ENCODE measurements at regions of chr9 and their contacts with region 1.

Region 1: DNA sequence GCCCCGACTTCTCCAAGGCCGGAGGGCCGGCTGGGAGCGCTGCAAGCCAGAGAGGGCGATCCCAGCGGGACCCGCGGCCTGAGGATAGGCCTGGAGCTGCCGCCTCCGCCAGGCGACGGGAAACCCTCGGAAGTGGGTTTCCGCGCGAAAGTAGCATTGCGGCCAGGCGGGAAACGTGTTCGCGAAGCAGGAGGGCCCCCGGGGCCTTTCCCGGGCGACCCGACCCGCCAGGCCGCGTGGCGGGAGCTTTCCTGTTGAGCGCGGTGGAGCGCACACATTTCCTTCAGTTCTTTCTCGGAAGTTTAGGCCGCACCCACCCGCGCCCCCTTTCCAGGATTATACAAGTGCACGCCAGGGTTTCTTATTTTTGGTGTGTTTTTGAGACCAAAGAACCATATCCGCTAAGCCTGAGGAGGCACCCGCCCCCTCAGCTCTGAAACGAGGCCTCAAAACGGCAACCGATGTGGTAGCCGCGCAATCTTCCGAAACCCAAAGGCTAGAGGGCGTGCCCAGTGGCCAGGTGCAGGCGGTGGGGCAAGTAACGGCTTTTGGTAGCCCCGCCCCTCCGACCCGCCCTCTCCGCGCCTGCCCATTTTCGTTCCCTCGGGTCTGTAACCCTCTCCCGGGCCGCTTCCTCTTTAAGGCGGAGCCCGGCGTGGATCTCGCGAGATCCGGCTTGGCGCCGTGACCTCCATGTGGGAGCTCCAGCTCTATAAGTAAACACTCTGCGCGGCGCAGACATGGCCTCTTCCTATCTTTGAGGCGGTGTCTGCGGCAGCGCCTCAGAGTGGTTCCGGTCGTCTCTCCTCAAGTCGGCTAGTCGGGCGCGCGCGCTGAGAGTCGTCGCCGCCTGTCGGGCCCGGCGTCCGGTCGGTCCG is at the start of gene UHRF2:
- DNase-seq: peak; percentile 98
- H3K4me3 Mint-ChIP-seq: peak within 1 kb of the TSS; percentile 96
- H3K27ac Mint-ChIP-seq: peak within 1 kb of the TSS; percentile 94
- H3K4me1 Mint-ChIP-seq: peaks cover 39% of the 10 kb centered on the region
- H3K27me3 Mint-ChIP-seq: peaks cover 2% of the 10 kb centered on the region
- total RNA-seq, gene UHRF2: 79.7 and 82.9 TPM in 2 replicates

Region 2: DNA sequence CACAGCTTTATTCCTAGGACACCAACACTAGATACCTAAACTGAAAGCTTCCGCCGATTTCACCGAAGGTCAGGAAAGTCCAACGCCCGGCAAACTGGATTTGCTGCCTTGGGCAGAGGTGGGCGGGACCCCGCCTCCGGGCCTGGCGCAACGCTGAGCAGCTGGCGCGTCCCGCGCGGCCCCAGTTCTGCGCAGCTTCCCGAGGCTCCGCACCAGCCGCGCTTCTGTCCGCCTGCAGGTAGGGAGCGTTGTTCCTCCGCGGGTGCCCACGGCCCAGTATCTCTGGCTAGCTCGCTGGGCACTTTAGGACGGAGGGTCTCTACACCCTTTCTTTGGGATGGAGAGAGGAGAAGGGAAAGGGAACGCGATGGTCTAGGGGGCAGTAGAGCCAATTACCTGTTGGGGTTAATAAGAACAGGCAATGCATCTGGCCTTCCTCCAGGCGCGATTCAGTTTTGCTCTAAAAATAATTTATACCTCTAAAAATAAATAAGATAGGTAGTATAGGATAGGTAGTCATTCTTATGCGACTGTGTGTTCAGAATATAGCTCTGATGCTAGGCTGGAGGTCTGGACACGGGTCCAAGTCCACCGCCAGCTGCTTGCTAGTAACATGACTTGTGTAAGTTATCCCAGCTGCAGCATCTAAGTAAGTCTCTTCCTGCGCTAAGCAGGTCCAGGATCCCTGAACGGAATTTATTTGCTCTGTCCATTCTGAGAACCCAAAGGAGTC is 962.2 kb before region 1 on chr9 and contains the start of gene CD274:
- intact Hi-C with region 1: loop called (anchors 10 kb)
- DNase-seq: peak; percentile 77
- H3K4me3 Mint-ChIP-seq: peak within 1 kb of the TSS; percentile 97
- H3K27ac Mint-ChIP-seq: peak within 1 kb of the TSS; percentile 92
- H3K4me1 Mint-ChIP-seq: peaks cover 71% of the 10 kb centered on the region
- H3K27me3 Mint-ChIP-seq: no peaks in the 10 kb centered on the region
- total RNA-seq, gene CD274: 36.7 and 40.5 TPM in 2 replicates

Region 3: GRCh38 chr9:6008169-6008979 is 404.4 kb before region 1 on chr9:
- intact Hi-C with region 1: loop called (anchors 2 kb)
- DNase-seq: peak; percentile 92
- H3K4me3 Mint-ChIP-seq: peak overlapping the region; percentile 74
- H3K27ac Mint-ChIP-seq: peak overlapping the region; percentile 84
- H3K4me1 Mint-ChIP-seq: peaks cover 53% of the 10 kb centered on the region
- H3K27me3 Mint-ChIP-seq: no peaks in the 10 kb centered on the region

Region 4: GRCh38 chr9:6428940-6429889 is 16.5 kb after region 1 on chr9:
- intact Hi-C with region 1: loop called (anchors 1 kb)
- DNase-seq: peak; percentile 31
- H3K4me3 Mint-ChIP-seq: peak overlapping the region; percentile 41
- H3K27ac Mint-ChIP-seq: peak overlapping the region; percentile 69
- H3K4me1 Mint-ChIP-seq: peaks cover 61% of the 10 kb centered on the region
- H3K27me3 Mint-ChIP-seq: no peaks in the 10 kb centered on the region

Region 5: DNA sequence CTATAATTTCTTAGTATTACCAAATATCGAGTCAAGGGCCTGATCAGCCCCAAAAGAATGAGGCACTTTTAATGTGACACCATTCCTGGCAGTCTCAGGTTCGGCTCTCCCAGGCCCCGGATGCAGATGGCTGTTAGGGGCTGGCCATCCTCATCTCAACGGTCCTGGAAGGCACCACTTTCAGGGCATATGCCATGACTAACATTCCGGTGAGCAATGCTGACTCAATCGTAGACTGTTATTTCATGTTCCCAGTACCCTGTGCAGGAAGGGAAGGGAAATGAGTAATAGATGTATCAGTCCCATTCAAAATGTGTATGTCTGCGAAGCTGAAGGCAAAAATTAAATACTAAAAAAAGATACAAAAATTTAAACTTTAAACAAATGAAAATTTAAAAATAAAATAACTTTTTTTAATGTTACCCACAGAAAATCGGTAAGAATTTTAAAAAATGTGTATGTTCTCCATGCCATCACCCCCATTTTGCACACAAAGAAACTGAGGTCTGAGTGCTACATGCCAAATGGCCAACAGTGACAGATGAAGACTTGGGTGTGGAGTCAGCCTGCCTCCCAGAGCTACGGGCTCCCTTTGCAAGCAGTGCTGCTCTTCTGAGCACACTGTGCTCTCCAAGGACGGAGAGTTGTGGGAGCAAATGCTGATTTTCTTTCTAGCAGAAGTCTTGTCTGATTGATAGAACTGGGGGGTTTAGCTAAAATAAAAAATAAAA is 153.8 kb after region 1 on chr9:
- intact Hi-C with region 1: loop called (anchors 1 kb)
- DNase-seq: peak; percentile 19
- H3K4me3 Mint-ChIP-seq: peak overlapping the region; percentile 33
- H3K27ac Mint-ChIP-seq: peak overlapping the region; percentile 82
- H3K4me1 Mint-ChIP-seq: peaks cover 19% of the 10 kb centered on the region
- H3K27me3 Mint-ChIP-seq: peaks cover 5% of the 10 kb centered on the region

Region 6: GRCh38 chr9:6757456-6758247 is 344.9 kb after region 1 on chr9 and contains the start of gene KDM4C:
- intact Hi-C with region 1: loop called (anchors 2 kb)
- DNase-seq: peak; percentile 91
- H3K4me3 Mint-ChIP-seq: peak within 1 kb of the TSS; percentile 97
- H3K27ac Mint-ChIP-seq: peak within 1 kb of the TSS; percentile 100
- H3K4me1 Mint-ChIP-seq: peaks cover 16% of the 10 kb centered on the region
- H3K27me3 Mint-ChIP-seq: no peaks in the 10 kb centered on the region
- total RNA-seq, gene KDM4C: 36.0 and 38.4 TPM in 2 replicates

Measured in activated T-helper 2 cell treated with anti-CD3 and anti-CD28 coated beads, Interferon-gamma antibody, Interleukin-2, Interleukin-4, amounts not matched to agents 10 μg/mL and 5 μg/mL and 100 μg/mL, durations not matched to agents 14 hours and 24 hours and 36 hours (primary cell).